HEK293 (cell line): ENCODE measurements at regions of chrX and their contacts with region 1.

Region 1: GRCh38 chrX:153971450-153972367 is at the start of gene HCFC1:
- H3K4me3 ChIP-seq: peak within 1 kb of the TSS; percentile 95
- H3K27ac ChIP-seq: peak within 1 kb of the TSS; percentile 99
- H3K4me1 ChIP-seq: peaks cover 10% of the 10 kb centered on the region
- CTCF ChIP-seq: no peak; the same call in 1 of the 2 replicates

Region 2: GRCh38 chrX:153708415-153708814 is 263.3 kb before region 1 on chrX:
- CTCF ChIA-PET with region 1: no interaction called
- POLR2A ChIA-PET with region 1: no interaction called
- H3K4me3 ChIP-seq: no peak overlapping the region
- H3K27ac ChIP-seq: no peak overlapping the region
- H3K4me1 ChIP-seq: no peaks in the 10 kb centered on the region
- CTCF ChIP-seq: peak; percentile 85

Region 3: GRCh38 chrX:153885968-153886903 is 85.5 kb before region 1 on chrX and contains the start of gene L1CAM:
- CTCF ChIA-PET with region 1: no interaction called
- POLR2A ChIA-PET with region 1: no interaction called
- H3K4me3 ChIP-seq: peak within 1 kb of the TSS; percentile 12
- H3K27ac ChIP-seq: no peak within 1 kb of the TSS
- H3K4me1 ChIP-seq: no peaks in the 10 kb centered on the region
- CTCF ChIP-seq: no peak

Region 4: DNA sequence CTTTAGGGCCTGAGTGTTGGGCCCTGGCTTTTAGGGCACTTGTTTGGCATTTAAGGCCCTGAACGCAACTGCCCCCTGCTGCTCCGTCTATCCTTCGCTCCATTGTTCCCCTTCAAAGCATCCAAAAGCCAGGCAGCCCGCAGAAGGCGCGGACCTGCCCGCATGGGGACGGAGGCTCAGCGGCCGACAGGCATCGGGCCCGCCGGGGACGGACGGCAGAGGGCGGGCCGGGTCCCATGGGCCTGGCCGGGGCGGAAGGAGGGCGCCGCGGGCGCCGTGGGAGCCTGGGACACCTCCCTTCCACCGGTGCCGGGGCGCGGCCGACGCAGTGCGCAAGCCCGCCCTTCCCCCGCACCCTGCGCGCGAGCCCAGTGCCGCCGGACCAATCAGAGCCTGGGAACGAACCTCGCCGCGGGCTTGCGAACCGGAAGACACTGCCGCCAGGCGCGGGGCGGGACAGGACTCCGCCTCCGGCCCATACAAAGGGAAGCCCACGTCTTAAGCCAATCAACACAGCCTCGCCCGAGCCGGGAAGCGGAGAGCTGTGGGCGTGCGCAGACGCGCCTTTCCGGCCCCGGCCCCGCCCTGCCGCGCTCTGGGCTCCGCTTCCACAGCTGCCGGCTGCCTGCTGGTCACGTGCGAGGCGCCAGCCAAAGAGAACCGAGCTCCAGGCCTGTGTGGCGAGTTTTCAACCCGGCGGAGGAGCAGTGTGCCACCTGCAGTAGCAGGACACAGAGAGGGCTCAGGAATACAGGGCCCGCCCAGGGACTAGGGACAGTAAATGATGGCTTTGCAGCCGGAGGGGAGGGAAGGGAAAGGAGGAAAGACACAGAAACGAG is 43.6 kb before region 1 on chrX:
- CTCF ChIA-PET with region 1: interaction called, 12 read pairs
- POLR2A ChIA-PET with region 1: interaction called, 67 read pairs
- H3K4me3 ChIP-seq: peak overlapping the region; percentile 66
- H3K27ac ChIP-seq: peak overlapping the region; percentile 95
- H3K4me1 ChIP-seq: peaks cover 10% of the 10 kb centered on the region
- CTCF ChIP-seq: peak; percentile 83

Region 5: DNA sequence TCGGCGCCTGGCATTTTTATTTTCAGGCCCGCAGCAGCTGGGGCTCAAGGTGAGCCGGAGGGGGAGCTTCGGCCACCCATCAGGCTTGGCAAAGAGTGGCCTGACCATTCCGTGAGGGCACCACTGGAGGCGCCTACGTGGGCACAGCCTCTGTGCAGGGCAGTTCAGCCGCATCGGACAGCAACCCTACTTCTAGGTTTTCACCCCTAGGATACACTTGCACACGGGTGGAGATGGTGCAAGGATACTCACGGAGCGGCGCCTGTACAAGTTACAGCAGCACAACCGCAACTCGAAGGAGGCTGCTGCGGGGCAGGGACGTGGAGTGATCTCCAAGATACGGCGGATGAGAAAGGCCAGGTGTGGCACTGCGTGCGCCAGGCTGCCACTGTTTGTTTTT is 10.9 kb before region 1 on chrX:
- CTCF ChIA-PET with region 1: no interaction called
- POLR2A ChIA-PET with region 1: interaction called, 13 read pairs
- H3K4me3 ChIP-seq: no peak overlapping the region
- H3K27ac ChIP-seq: no peak overlapping the region
- H3K4me1 ChIP-seq: no peaks in the 10 kb centered on the region
- CTCF ChIP-seq: no peak